H1 (cell line): ENCODE measurements at regions of chr13 and their contacts with region 1.

Region 1: GRCh38 chr13:73765651-73766384 is 368.4 kb downstream of the KLF12 start:
- DNase-seq: peak in 1 of 2 experiments; percentile 57
- H3K4me3 ChIP-seq: peak overlapping the region in 3 of 4 experiments; percentile 14 to 39 (median 20); a peak in 4 of 8 replicates
- H3K27ac ChIP-seq: no peak overlapping the region
- H3K4me1 ChIP-seq: peaks cover 5 to 20% (median 14%) of the 10 kb centered on the region in 4 experiments; a peak in 6 of 7 replicates
- H3K27me3 ChIP-seq: no peaks in the 10 kb centered on the region
- CTCF ChIP-seq: no peak
- EP300 ChIP-seq: peak in 1 of 2 experiments; percentile 30; a peak in 1 of 3 replicates
- POLR2A ChIP-seq: no peak
- RAD21 ChIP-seq: 0 out of 4 replicates have a peak, but pooled peaks of 1 of the 2 experiments have one; percentile 2

Region 2: GRCh38 chr13:73754727-73755292 is 11.0 kb before region 1 on chr13:
- CTCF ChIA-PET with region 1: interaction called, 26 read pairs
- POLR2A ChIA-PET with region 1: no interaction called
- DNase-seq: no peak
- H3K4me3 ChIP-seq: no peak overlapping the region
- H3K27ac ChIP-seq: no peak overlapping the region
- H3K4me1 ChIP-seq: peaks cover 0 to 6% (median 0%) of the 10 kb centered on the region in 4 experiments; a peak in 2 of 7 replicates
- H3K27me3 ChIP-seq: no peaks in the 10 kb centered on the region
- CTCF ChIP-seq: peak in 2 of 3 experiments; percentile 36 to 68; a peak in 2 of 4 replicates
- EP300 ChIP-seq: no peak
- POLR2A ChIP-seq: no peak
- RAD21 ChIP-seq: peak; percentile 79 to 80

Region 3: DNA sequence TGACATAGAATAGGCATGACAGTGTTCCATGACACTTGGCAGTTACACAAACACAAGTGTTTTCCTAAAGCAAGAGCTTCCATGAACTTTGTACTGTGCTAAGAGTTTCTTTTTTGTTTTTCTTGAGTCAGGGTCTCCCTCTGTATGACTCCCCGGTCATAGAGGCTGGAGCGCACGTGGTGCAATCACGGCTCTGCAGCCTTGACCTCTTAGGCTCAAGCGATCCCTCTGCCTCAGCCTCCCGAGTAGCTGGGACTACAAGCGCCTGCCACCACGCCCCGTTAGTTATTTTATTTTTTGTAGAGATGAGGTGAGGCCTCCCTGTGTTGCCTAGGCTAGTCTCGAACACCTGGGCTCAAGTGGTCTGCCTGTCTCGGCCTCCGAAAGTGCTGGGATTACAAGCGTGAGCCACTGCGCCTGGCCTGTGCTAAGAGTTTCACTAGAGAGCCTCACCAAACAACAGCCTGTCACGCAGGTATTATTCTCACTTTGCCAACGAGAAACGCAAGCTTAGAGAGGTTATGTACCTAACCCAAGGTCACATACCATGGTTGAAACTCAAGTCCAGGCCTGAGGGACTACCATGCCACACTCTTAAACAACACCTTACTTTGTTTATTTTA is 12.5 kb after region 1 on chr13:
- CTCF ChIA-PET with region 1: interaction called, 14 read pairs
- POLR2A ChIA-PET with region 1: interaction called, 5 read pairs
- DNase-seq: no peak
- H3K4me3 ChIP-seq: no peak overlapping the region
- H3K27ac ChIP-seq: no peak overlapping the region
- H3K4me1 ChIP-seq: no peaks in the 10 kb centered on the region
- H3K27me3 ChIP-seq: no peaks in the 10 kb centered on the region
- CTCF ChIP-seq: no peak
- EP300 ChIP-seq: no peak
- POLR2A ChIP-seq: no peak
- RAD21 ChIP-seq: no peak